ENCODE measurements at regions of chr15 and their contacts with region 1.

Region 1: GRCh38 chr15:60397772-60398445 is at the start of gene ANXA2:
- DNase-seq: peak; percentile 90
- H3K4me3 Mint-ChIP-seq: peak within 1 kb of the TSS; percentile 97
- H3K27ac Mint-ChIP-seq: peak within 1 kb of the TSS; percentile 98
- H3K4me1 Mint-ChIP-seq: peaks cover 55% of the 10 kb centered on the region
- H3K27me3 Mint-ChIP-seq: peaks cover 7% of the 10 kb centered on the region
- total RNA-seq, gene ANXA2: 558 to 566 TPM

Region 2: DNA sequence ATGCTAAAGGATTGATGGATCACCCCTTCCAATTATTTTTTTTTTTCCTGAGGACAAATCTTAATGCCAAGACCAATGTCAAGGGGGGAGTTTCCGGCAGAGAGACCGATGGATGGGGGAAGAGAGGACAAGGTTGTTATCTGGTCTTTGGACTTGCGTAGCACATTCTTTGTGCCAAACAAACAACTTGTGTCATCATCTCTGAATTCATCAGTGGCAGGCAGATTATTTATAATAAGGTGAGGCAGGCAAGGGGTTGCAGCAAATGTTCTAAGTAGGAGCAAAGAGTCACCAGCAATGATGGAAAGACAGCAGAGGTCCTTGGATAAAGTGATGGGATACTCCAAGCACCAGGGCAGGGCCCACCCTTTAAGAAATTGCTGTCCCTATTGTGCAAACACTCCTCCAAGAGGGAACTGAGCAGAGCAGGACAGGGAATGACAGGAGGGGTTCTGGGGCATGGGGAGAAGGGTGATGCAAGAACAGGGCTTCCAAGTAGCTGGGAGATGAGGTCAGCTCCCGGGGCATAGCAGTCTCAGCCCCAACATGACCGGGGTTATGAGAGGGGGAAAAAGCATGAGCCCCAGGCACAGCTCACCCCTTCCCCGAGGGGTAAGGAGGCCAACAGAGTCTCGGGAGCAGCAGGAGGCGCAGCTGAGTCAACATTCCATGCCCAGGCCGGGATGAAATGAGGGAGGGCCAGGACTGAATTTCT is 57.5 kb before region 1 on chr15:
- CTCF ChIA-PET with region 1: no interaction called
- POLR2A ChIA-PET with region 1: no interaction called
- DNase-seq: no peak
- H3K4me3 Mint-ChIP-seq: no peak overlapping the region
- H3K27ac Mint-ChIP-seq: no peak overlapping the region
- H3K4me1 Mint-ChIP-seq: no peaks in the 10 kb centered on the region
- H3K27me3 Mint-ChIP-seq: peaks cover 4% of the 10 kb centered on the region

Region 3: DNA sequence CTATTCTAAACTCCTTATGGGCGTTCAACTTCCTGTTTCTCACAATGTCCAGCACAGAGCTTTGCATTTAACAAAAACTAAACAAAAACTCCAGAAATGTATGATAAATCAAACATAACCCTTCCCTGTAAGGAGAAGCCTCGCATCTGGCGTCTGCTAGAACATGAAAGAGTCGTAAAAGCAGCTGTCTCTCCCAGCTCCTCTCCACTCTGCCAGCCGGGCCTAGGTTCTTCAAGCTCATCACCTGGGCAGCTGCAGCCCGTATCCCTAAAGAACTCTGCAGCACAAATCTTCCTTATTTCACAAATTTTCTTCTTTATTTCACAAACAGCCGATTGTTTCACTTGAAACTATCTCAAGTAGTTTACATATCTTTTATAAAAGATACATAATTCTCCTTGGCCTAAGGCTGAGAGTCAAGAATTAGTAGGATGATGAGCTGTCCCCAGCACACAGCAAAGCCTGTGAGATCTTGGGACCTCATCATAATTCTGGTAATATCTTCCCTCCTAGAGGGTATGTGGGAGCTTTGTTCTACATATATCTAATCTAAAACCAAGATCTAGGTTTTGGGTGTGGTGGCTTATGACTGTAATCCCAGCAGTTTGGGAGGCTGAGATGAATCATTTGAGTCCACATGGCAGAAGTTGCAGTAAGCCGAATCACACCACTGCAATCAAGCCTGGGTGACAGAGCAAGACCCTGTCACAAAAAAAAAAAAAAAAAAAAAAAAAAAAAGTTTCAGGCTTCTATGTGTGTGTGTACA is 35.4 kb before region 1 on chr15:
- CTCF ChIA-PET with region 1: interaction called, 24 read pairs
- POLR2A ChIA-PET with region 1: interaction called, 33 read pairs
- DNase-seq: peak; percentile 62
- H3K4me3 Mint-ChIP-seq: no peak overlapping the region
- H3K27ac Mint-ChIP-seq: peak overlapping the region; percentile 80
- H3K4me1 Mint-ChIP-seq: peaks cover 47% of the 10 kb centered on the region
- H3K27me3 Mint-ChIP-seq: no peaks in the 10 kb centered on the region

Region 4: DNA sequence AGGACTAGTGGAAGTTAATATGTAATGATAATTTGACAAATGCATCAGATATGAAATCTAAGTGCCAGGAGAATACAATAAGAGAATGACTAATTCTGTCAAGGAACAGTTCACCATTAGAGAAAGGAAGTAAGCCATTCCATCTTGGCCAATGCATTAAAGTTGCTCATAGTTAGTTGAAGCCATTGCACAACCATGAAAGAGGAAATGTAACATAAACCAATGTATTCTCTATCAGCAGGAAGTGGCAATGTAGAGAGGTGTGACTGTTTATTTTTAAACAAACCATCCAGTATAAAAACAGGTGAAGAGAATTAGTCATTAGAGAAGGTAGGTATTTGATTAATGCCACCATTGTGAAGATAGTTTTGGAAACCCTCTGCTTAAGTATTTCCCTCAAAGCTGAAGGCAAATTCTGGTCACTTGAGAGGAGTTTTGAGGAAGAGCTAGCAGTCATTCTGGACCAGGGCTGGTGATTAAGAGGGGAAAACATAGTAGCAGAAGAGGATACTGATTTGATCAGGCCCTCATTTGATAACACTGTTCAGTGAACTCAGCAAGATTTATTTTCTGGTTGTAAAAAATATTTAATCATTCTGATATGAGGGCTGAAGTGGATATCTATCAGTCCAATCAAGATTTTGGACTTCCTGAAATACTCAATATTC is 10.7 kb after region 1 on chr15:
- CTCF ChIA-PET with region 1: no interaction called
- POLR2A ChIA-PET with region 1: interaction called, 43 read pairs
- DNase-seq: no peak
- H3K4me3 Mint-ChIP-seq: no peak overlapping the region
- H3K27ac Mint-ChIP-seq: peak overlapping the region; percentile 82
- H3K4me1 Mint-ChIP-seq: peaks cover 34% of the 10 kb centered on the region
- H3K27me3 Mint-ChIP-seq: no peaks in the 10 kb centered on the region

Region 5: DNA sequence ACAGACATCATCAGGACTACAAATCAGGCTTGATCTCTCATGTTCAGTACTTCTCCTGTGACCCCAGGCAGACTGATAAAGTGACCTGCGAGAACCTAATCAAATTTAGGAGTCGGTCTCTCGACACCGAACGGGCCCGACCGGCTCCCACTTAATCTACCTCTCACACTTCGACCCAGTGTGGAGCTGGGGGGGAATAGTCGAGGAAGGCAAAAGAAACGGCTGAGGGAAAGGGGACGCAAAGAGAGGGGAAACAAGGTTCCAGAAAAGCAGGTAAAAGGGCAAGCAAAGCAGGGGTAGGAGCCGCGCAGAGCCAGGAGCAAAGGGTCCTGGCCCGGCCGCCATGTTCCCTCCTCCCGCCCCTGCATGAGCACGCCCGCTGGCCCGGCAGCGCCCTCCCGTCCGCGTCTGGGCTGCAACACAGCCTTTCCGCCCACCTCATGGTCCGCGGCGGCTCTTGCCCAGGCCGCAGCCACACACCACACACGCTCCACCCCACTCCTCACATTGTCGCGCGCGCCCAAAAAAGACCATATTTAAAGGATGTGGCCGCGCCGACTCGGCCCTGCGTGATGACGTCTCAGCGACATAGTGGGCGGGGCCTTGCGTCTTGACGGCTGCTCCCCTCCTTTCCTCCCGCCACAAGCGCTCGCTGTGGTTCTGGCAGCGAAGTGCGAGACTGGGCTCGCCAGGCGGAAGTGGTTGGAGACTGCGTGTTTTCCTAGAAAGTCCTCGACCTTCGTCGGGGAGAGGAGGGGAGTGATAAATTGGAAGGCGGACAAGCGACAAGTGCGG is 80.9 kb after region 1 on chr15 and contains the start of gene ICE2:
- CTCF ChIA-PET with region 1: interaction called, 5 read pairs
- POLR2A ChIA-PET with region 1: interaction called, 50 read pairs
- DNase-seq: peak; percentile 98
- H3K4me3 Mint-ChIP-seq: peak within 1 kb of the TSS; percentile 98
- H3K27ac Mint-ChIP-seq: peak within 1 kb of the TSS; percentile 97
- H3K4me1 Mint-ChIP-seq: peaks cover 59% of the 10 kb centered on the region
- H3K27me3 Mint-ChIP-seq: no peaks in the 10 kb centered on the region
- total RNA-seq, gene ICE2: 56.9 to 60.4 TPM

Region 6: DNA sequence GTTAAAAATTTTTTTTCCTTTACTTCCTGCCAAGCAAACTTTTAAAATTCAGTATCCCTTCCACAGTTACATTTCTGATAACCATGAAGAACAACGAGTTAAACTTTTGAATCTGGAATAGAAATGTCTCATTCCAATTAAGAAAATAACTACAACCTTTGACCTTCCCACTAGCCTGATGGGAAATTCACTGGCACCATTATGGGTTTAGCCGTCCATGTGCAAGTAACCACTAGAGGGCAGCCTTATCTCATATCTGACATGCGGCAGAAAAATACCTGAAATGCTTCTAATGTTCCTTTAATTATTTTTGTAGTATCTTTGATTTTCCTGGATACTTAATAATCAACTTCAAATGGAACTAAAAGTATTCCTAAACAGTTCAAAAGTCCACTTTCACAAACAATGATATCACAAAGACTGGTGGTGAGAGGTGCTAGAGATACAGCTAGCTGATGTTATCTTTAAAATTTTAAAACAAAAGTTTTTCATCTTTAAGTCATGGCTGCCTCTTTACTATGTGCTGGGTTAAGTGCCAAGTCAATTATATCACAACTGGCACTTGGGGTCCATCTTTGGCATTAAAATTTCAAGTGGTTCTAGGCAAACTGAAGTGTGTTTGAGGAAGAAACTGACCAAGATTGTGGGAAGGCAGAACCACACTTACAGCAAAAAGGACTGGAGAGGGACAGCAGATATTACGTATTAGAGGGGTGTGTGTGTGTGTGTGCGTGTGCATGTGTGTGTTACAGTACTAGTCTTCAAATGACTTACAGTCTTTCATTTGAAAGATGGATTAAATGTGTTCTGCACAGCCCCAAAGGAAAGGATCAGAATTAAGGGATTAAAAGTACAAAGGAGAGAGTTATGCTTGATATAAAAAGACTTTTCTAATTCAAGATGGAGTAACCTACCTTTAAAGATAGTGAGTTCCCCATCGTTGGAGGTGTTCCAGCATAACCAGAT is 188.1 kb after region 1 on chr15:
- CTCF ChIA-PET with region 1: no interaction called
- POLR2A ChIA-PET with region 1: interaction called, 24 read pairs
- DNase-seq: peak; percentile 66
- H3K4me3 Mint-ChIP-seq: peak overlapping the region; percentile 69
- H3K27ac Mint-ChIP-seq: peak overlapping the region; percentile 96
- H3K4me1 Mint-ChIP-seq: peaks cover 87% of the 10 kb centered on the region
- H3K27me3 Mint-ChIP-seq: no peaks in the 10 kb centered on the region